ENCODE measurements at regions of chr17 and their contacts with region 1.

Region 1: DNA sequence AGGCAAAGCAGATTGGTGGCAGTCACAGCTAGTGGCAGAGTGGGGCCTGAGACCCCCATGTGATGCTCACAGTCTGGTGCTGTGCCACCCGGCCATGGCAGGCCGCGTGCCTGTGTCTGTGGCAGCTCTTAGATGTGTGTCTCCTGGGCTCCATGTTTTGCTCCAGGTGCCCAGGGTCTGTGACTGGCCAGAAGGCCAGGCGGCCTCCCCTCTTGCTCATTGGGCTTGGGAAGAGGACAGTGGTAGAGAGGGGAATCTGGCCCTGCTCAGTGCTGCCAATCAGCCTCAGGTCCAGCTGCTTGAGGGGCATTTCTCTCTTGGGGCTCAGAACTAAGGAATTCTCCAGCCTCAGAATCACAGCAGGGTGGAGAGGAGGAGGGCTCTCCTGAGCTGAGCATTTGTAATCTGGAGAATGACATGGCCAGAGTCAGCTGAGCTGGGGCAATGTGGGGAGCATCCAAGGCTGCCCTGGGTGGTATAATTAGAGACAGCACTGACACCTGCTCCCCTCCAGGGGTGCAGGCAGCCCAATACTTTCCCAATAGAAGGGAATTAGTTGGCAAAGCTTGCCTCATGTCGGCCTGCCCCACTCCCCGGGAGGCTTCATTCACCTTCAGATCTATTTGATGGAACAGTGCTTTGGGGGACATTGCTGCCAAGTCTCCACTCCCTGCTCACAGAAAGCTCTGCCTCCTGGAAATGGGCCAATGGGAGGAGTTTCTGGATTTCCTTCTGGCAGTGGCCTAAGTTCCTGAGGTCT is 2.7 kb upstream of the LASP1NB start:
- DNase-seq: peak; percentile 53
- ATAC-seq: peak; percentile 55
- H3K4me3 Mint-ChIP-seq: no peak overlapping the region
- H3K27ac Mint-ChIP-seq: peak overlapping the region; percentile 45; the same call in 1 of the 2 replicates
- H3K4me1 Mint-ChIP-seq: peaks cover 38% of the 10 kb centered on the region
- H3K27me3 Mint-ChIP-seq: no peaks in the 10 kb centered on the region; the same call in 1 of the 2 replicates
- CTCF ChIP-seq: no peak

Region 2: GRCh38 chr17:38853292-38854219 is 69.2 kb before region 1 on chr17 and contains the start of gene RPL23:
- CTCF ChIA-PET with region 1: interaction called, 12 read pairs
- POLR2A ChIA-PET with region 1: interaction called, 4 read pairs
- DNase-seq: peak; percentile 92
- ATAC-seq: peak; percentile 83
- H3K4me3 Mint-ChIP-seq: peak within 1 kb of the TSS; percentile 99
- H3K27ac Mint-ChIP-seq: peak within 1 kb of the TSS; percentile 100
- H3K4me1 Mint-ChIP-seq: peaks cover 32% of the 10 kb centered on the region
- H3K27me3 Mint-ChIP-seq: no peaks in the 10 kb centered on the region; the same call in 1 of the 2 replicates
- CTCF ChIP-seq: no peak
- total RNA-seq, gene RPL23: 1,832 to 2,028 TPM (median 1,945 TPM) in 3 replicates

Region 3: DNA sequence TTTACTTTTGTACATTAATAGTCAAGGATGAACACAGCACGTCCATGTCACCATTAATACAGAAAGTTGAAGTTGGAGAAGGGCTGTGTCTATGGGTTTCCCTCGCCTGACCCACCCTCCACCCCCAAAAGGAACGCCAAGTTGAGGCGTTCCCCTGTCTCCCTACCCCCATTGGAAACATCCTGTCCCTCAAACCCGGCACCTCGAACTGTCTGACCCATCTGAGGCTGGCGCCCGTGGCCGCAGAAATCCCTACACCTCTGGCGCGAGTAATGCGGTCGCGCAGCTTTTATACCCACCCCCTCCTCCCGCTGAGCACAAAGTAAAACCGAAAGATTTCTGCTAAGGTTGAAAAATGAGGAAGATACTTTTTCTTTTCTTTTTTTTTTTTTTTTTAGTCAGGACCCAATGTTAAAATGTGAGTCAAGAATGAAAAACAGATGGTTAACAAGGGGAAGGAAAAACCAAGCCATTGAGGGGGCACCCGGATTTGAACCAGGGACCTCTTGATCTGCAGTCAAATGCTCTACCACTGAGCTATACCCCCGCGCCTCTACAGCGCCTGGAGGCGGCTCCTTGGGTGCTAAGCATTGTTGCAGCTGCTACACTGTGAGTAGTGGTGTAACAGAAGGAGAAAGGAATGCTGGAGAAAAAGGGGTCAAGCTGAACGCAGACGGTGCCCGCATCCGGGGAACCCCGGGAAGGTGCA is 53.7 kb before region 1 on chr17:
- CTCF ChIA-PET with region 1: interaction called, 10 read pairs
- POLR2A ChIA-PET with region 1: interaction called, 8 read pairs
- DNase-seq: peak; percentile 95
- ATAC-seq: peak; percentile 37
- H3K4me3 Mint-ChIP-seq: peak overlapping the region; percentile 92
- H3K27ac Mint-ChIP-seq: peak overlapping the region; percentile 97
- H3K4me1 Mint-ChIP-seq: peaks cover 32% of the 10 kb centered on the region
- H3K27me3 Mint-ChIP-seq: no peaks in the 10 kb centered on the region
- CTCF ChIP-seq: no peak

Region 4: GRCh38 chr17:38879878-38880682 is 42.6 kb before region 1 on chr17:
- CTCF ChIA-PET with region 1: interaction called, 17 read pairs
- POLR2A ChIA-PET with region 1: no interaction called
- DNase-seq: peak; percentile 79
- ATAC-seq: peak; percentile 92
- H3K4me3 Mint-ChIP-seq: peak overlapping the region; percentile 63
- H3K27ac Mint-ChIP-seq: peak overlapping the region; percentile 98
- H3K4me1 Mint-ChIP-seq: peaks cover 92% of the 10 kb centered on the region
- H3K27me3 Mint-ChIP-seq: no peaks in the 10 kb centered on the region
- CTCF ChIP-seq: no peak

Region 5: DNA sequence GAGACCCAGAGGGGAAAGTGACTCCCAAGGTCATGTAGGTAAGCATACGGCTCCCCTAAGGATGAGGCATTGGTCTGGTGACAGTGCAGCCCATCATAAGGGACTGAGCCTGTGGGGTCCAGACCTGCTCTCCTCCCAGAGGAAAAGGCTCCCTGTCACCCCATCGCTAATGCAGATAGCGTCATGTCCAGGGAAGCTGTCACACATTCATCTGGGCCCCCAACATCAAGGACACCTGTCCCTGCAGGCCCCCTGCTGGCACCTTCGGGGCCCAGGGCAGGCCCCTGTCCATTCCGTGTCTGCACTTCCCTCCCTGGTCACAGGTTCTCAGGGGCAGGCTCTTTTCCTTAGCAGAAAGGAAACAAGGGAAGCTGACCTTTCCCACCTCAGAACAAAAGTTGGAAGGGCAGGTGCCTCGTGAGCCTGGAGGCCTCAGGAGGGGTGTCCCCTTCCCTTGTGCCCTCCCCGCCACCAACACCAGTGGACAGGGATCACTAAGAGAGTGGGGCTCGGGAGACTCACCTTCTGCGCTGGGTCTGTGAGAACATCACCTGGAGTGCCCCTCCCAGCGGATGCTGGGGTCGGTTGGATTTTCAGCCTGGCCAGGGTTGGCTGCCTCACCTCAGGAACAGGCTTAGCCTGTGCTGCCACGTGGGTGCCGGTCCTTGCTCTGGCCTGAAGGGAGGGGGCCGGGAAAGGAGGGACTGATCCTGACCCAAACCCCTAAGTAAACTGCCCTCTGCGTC is 14.6 kb before region 1 on chr17:
- CTCF ChIA-PET with region 1: interaction called, 14 read pairs
- POLR2A ChIA-PET with region 1: interaction called, 3 read pairs
- DNase-seq: peak; percentile 13
- ATAC-seq: peak; percentile 43
- H3K4me3 Mint-ChIP-seq: no peak overlapping the region
- H3K27ac Mint-ChIP-seq: 0 out of 2 replicates have a peak overlapping the region, but pooled peaks have one; percentile 86
- H3K4me1 Mint-ChIP-seq: peaks cover 18% of the 10 kb centered on the region
- H3K27me3 Mint-ChIP-seq: no peaks in the 10 kb centered on the region
- CTCF ChIP-seq: no peak

Region 6: GRCh38 chr17:38967290-38967738 is 44.6 kb after region 1 on chr17 and contains the start of gene FBXO47:
- CTCF ChIA-PET with region 1: interaction called, 26 read pairs
- POLR2A ChIA-PET with region 1: no interaction called
- DNase-seq: peak; percentile 96
- ATAC-seq: peak; percentile 98
- H3K4me3 Mint-ChIP-seq: peak within 1 kb of the TSS; percentile 67
- H3K27ac Mint-ChIP-seq: peak within 1 kb of the TSS; percentile 89
- H3K4me1 Mint-ChIP-seq: peaks cover 14% of the 10 kb centered on the region
- H3K27me3 Mint-ChIP-seq: no peaks in the 10 kb centered on the region; the same call in 1 of the 2 replicates
- CTCF ChIP-seq: no peak
- total RNA-seq, gene FBXO47: not detected in 3 replicates

Region 7: GRCh38 chr17:39018267-39019134 is 95.8 kb after region 1 on chr17:
- CTCF ChIA-PET with region 1: no interaction called
- POLR2A ChIA-PET with region 1: no interaction called
- DNase-seq: no peak
- ATAC-seq: no peak
- H3K4me3 Mint-ChIP-seq: no peak overlapping the region
- H3K27ac Mint-ChIP-seq: no peak overlapping the region
- H3K4me1 Mint-ChIP-seq: peaks cover 13% of the 10 kb centered on the region
- H3K27me3 Mint-ChIP-seq: no peaks in the 10 kb centered on the region
- CTCF ChIP-seq: no peak

Region 8: DNA sequence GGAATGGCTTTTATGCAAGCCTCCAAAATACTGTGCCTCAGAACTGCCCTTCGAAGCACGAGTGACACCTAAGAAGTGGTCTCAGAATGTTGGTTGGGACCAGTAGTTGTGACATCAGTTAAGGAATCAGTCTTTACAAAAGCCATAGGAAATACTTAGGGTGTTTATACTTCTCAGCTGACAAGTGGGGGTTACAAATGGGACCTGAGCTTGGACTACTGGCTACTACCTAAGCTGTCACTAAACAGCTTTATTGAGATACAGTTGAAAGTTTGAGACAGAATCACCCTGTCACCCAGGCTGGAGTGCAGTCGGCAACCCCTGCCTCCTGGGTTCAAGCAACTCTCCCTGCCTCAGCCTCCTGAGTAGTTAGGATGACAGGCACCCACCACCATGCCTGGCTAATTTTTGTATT is 282.4 kb after region 1 on chr17:
- CTCF ChIA-PET with region 1: no interaction called
- POLR2A ChIA-PET with region 1: no interaction called
- DNase-seq: no peak
- ATAC-seq: no peak
- H3K4me3 Mint-ChIP-seq: no peak overlapping the region
- H3K27ac Mint-ChIP-seq: peak overlapping the region; percentile 33; the same call in 1 of the 2 replicates
- H3K4me1 Mint-ChIP-seq: peaks cover 43% of the 10 kb centered on the region
- H3K27me3 Mint-ChIP-seq: peaks cover 2% of the 10 kb centered on the region
- CTCF ChIP-seq: no peak

Region 9: DNA sequence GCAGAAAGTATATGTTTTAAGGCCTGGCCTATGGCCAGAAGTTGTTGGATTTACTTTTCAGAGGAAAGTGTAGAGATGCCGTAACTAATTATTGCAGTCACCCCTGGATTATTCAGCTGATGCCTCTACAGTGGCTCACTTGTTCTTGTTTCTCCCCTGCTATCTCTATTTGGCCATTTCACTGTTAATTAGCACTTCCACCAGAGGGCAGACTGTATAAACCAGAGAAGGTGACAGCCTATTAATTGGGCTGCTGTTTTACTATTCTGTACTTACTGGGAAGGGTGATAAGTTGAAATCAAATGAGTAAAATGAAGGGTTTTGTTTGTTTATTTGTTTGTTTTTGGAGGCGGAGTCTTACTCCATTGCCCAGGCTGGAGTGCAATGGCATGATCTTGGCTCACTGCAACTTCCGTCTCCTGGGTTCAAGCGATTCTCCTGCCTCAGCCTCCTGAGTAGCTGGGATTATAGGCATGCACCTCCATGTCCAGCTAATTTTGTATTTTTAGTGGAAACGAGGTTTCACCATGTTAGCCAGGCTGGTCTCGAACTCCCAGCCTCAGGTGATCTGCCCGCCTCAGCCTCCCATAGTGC is 604.6 kb after region 1 on chr17:
- CTCF ChIA-PET with region 1: no interaction called
- POLR2A ChIA-PET with region 1: no interaction called
- DNase-seq: no peak
- ATAC-seq: peak; percentile 67
- H3K4me3 Mint-ChIP-seq: no peak overlapping the region
- H3K27ac Mint-ChIP-seq: no peak overlapping the region
- H3K4me1 Mint-ChIP-seq: no peaks in the 10 kb centered on the region
- H3K27me3 Mint-ChIP-seq: no peaks in the 10 kb centered on the region
- CTCF ChIP-seq: 0 out of 2 replicates have a peak, but pooled peaks have one; percentile 30